ENCODE measurements at regions of chr12 and their contacts with region 1.

Region 1: GRCh38 chr12:6285063-6285477 is 25.4 kb upstream of the PLEKHG6 start:
- DNase-seq: peak; percentile 48 to 79
- H3K4me3 ChIP-seq: no peak overlapping the region
- H3K27ac ChIP-seq: no peak overlapping the region
- H3K4me1 ChIP-seq: peaks cover 40% of the 10 kb centered on the region
- H3K27me3 ChIP-seq: no peaks in the 10 kb centered on the region
- CTCF ChIP-seq: peak; percentile 99

Region 2: DNA sequence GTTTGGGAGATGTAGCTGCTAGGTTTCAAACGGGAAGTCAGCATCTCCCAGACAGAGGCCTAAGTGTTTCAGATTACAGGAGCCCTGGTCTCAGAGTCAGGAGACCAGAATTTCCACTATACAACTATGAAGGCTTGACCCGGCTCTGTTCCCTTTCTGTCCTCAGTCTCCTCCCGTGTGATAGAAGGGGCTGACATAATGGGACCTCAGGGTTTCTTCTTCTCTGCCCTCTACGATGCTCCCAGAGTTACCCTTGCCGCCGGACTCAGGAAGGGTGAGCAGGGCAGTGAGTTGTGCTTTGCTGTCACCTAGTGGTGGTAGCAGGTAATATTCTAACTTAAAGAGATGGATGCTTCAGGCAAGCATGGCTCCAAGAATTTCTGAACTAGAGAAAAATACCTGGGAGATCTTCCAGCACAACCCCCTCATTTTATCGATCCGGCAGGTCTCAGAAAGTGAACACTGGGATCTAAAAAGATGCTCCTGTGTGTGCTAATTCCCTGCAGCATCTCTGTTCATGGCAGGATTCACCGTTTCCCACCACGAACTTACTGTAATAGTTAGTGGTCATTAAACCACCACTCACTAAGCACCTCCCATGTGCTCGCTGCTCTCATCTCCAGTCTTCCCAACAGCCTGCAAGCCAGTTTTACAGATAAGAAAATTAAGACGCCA is 245.0 kb before region 1 on chr12:
- CTCF ChIA-PET with region 1: no interaction called
- POLR2A ChIA-PET with region 1: no interaction called
- intact Hi-C with region 1: loop called (anchors 1 kb)
- DNase-seq: peak; percentile 44 to 65
- H3K4me3 ChIP-seq: no peak overlapping the region
- H3K27ac ChIP-seq: no peak overlapping the region
- H3K4me1 ChIP-seq: peaks cover 11% of the 10 kb centered on the region
- H3K27me3 ChIP-seq: no peaks in the 10 kb centered on the region
- CTCF ChIP-seq: peak; percentile 98

Region 3: DNA sequence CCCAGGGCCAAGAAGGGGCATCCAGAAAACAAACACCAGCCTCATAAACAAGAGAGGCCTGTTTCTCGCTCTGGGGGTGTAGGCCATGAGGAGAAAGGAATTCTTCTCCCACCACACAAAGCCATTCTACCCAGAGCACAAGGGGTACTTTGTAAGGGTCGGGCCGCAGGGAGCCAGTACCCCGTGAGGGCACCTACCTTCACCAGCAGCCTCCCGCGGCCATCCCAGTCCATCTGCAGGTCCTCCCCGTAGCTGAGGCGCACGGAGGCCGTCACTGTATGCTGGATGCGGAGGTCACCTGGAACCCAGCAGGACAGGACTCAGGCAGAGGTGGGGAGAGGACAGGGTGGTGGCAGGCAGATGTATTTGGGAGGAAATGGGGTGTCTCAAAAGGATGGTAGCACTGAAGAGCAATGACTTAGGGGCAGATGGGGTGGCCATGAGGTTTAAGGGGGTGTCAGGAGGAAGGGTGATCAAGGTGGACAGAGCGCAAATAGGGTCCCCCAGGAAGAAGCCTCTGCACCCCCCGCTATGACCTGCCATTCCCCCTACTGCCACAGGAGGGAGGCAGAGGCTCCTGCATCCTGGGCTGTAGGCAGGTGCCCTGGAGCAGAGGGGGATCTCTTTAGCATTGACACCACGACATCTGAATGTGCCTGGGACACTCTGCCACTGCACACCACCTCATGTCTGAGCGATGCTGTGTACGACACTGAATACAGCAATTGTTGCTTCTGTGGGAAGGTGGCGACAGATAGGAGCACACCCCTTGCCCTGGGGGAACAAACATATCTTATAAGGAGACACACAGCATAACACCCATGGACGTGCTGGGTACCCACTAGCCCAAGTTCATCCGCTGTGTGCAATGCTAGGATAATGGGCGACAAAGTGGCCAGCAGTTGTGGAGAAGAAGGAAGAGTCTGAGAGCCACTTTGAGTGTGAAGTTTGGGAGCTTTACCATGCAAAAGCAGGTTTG is 222.0 kb before region 1 on chr12:
- CTCF ChIA-PET with region 1: interaction called, 12 read pairs
- POLR2A ChIA-PET with region 1: interaction called, 7 read pairs
- intact Hi-C with region 1: loop called (anchors 1 kb)
- DNase-seq: peak; percentile 48 to 80
- H3K4me3 ChIP-seq: no peak overlapping the region
- H3K27ac ChIP-seq: no peak overlapping the region
- H3K4me1 ChIP-seq: peaks cover 34% of the 10 kb centered on the region
- H3K27me3 ChIP-seq: no peaks in the 10 kb centered on the region
- CTCF ChIP-seq: peak; percentile 98

Region 4: DNA sequence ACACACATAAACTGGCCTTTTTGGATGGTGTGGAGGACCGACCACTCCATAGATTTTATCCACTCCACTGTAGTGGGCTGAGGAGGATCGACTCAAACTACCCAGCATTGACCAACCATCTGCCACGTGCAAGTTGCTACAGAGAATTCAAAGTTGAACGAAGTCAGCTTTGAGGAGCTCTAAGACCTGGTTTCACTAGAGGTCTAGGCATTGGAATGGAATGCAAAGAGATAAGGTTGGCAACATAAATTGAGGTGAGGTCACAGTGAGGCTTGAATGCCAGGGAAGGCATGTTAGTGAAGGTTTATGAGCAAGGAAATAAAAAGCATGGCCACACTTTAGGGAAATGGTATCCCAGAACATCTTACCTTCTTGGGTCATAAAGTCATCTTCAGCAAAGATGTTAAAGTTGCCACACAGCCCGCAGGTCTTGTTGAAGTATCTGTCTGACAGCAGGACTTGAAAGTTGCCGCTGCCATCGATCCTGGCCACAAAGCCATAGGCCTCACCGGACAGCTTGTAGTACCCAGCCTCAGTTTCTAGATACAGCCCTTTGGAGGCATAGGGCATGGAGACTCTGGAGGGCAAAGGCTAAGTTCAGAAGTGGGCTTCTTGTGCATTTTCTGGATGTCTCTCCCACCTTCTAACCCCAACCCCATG is 174.9 kb before region 1 on chr12:
- CTCF ChIA-PET with region 1: no interaction called
- POLR2A ChIA-PET with region 1: interaction called, 20 read pairs
- intact Hi-C with region 1: no loop called
- DNase-seq: peak; percentile 20 to 84
- H3K4me3 ChIP-seq: no peak overlapping the region
- H3K27ac ChIP-seq: no peak overlapping the region
- H3K4me1 ChIP-seq: 0 out of 2 replicates have a peak, but pooled peaks cover 4% of the 10 kb centered on the region
- H3K27me3 ChIP-seq: no peaks in the 10 kb centered on the region
- CTCF ChIP-seq: no peak

Region 5: GRCh38 chr12:6241495-6241894 is 43.6 kb before region 1 on chr12:
- CTCF ChIA-PET with region 1: no interaction called
- POLR2A ChIA-PET with region 1: no interaction called
- intact Hi-C with region 1: no loop called
- DNase-seq: peak in 1 of 2 experiments; percentile 62
- H3K4me3 ChIP-seq: no peak overlapping the region
- H3K27ac ChIP-seq: no peak overlapping the region
- H3K4me1 ChIP-seq: peaks cover 10% of the 10 kb centered on the region; the same call in 1 of the 2 replicates
- H3K27me3 ChIP-seq: no peaks in the 10 kb centered on the region
- CTCF ChIP-seq: no peak

Region 6: DNA sequence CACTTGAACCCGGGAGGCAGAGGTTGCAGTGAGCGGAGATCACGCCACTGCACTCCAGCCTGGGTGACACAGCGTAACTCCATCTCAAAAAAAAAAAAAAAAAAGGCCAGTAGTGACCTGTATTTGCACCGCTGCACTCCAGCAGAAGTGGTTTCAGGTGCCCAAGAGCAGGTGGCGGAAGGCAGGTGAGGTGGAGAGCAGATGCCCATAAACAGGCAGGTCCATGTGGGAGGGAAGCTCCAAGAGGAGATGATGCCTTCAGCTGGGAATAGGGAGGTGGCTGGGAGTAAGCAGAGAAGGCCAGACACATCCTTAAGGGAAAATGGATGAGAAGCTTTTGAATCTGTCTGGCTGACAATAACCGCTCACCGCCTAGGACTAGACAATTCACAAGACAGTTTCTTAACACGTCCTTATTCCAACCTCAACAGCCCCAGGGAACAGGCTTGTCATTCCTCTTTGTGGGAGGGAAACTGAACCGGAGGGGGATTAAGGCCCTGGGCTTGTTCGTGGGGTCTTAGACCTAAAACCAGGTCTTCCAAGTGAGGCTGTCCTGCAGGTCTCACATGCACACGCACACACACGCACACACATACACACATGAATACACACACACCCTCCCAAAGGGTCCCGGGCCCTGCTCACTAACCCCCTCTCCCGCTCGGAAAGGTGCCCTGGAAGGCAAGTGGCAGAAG is 18.5 kb before region 1 on chr12:
- CTCF ChIA-PET with region 1: no interaction called
- POLR2A ChIA-PET with region 1: no interaction called
- intact Hi-C with region 1: no loop called
- DNase-seq: no peak
- H3K4me3 ChIP-seq: no peak overlapping the region
- H3K27ac ChIP-seq: no peak overlapping the region
- H3K4me1 ChIP-seq: peaks cover 29% of the 10 kb centered on the region
- H3K27me3 ChIP-seq: no peaks in the 10 kb centered on the region
- CTCF ChIP-seq: no peak

Region 7: DNA sequence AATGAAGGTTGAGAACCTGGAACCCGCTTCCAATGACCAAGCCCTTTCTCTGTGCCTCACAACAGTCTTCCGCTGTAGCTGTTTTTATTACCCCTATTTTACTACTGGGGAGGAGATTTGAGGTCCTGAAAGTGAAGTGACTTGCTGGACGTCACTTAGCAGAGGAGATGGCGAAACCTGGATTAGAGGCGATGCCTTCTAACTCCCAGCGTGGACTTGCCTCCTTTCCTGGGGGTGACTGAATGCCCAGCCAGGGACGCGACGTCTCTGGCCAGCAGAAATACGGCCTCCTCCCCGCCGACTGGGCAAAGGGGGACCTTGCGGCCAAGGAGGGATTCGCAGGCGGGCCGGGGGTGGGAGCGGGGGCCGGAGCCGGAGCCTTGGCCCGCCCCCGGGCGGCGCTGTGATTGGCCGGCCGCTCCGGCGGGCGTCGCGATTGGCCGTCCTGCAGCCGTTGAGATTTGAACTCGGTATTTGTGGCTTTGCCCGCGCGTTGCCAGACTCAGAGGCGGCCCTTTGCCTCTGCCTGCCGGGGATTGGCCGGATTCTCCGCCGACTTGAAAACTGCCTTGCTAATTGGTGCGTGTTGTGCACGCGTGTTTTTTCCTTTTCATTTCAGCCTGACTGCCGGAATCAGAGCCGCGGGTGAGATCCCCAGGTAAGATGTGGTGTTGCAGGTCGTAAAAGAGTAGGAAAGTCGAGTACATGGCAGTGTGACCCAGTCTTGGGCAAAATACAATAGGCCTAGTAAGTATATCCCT is 208.6 kb after region 1 on chr12 and contains the start of gene NCAPD2:
- CTCF ChIA-PET with region 1: no interaction called
- POLR2A ChIA-PET with region 1: no interaction called
- intact Hi-C with region 1: no loop called
- DNase-seq: peak; percentile 93 to 98
- H3K4me3 ChIP-seq: peak within 1 kb of the TSS; percentile 87
- H3K27ac ChIP-seq: peak within 1 kb of the TSS; percentile 85
- H3K4me1 ChIP-seq: peaks cover 24% of the 10 kb centered on the region
- H3K27me3 ChIP-seq: no peaks in the 10 kb centered on the region
- CTCF ChIP-seq: peak; percentile 46; the same call in 1 of the 2 replicates
- total RNA-seq, gene NCAPD2: 220 and 266 TPM in 2 replicates

Measured in PC-9 (cell line).